Motor neuron (in vitro differentiated cells): ENCODE measurements at regions of chr19 and their contacts with region 1.

Region 1: GRCh38 chr19:36514012-36514612 is 14.0 kb downstream of the ZNF260 start:
- ATAC-seq: no peak
- H3K4me3 ChIP-seq: no peak overlapping the region
- H3K27ac ChIP-seq: no peak overlapping the region
- H3K4me1 ChIP-seq: no peaks in the 10 kb centered on the region

Region 2: DNA sequence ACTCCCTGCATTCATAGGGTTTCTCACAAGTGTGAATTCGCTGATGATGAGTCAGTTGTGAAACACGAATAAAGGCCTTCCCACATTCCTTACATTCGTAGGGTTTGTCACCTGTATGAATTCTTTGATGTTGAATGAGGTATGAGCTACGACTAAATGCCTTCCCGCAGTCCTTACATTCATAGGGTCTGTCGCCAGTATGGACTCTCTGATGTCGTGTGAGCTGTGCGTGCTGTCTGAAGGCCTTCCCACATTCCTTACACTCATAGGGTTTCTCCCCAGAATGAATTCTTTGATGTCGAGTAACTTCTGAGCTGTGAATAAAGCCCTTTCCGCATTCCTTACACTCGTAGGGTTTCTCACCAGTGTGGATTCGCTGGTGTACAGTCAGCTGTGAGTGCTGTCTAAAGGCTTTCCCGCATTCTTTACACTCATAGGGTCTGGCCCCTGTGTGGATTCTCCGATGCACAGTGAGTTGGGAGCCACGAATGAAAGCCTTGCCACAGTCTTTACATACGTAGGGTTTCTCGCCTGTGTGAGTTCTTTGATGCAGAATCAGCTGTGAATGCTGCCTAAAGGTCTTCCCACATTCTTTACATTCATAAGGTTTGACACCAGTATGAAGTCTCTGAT is 331.4 kb before region 1 on chr19:
- in situ Hi-C with region 1: loop called in 1 of 9 experiments (anchors 25 kb)
- ATAC-seq: peak in 1 of 8 experiments; percentile 23
- H3K4me3 ChIP-seq: no peak overlapping the region
- H3K27ac ChIP-seq: no peak overlapping the region
- H3K4me1 ChIP-seq: no peaks in the 10 kb centered on the region

Region 3: DNA sequence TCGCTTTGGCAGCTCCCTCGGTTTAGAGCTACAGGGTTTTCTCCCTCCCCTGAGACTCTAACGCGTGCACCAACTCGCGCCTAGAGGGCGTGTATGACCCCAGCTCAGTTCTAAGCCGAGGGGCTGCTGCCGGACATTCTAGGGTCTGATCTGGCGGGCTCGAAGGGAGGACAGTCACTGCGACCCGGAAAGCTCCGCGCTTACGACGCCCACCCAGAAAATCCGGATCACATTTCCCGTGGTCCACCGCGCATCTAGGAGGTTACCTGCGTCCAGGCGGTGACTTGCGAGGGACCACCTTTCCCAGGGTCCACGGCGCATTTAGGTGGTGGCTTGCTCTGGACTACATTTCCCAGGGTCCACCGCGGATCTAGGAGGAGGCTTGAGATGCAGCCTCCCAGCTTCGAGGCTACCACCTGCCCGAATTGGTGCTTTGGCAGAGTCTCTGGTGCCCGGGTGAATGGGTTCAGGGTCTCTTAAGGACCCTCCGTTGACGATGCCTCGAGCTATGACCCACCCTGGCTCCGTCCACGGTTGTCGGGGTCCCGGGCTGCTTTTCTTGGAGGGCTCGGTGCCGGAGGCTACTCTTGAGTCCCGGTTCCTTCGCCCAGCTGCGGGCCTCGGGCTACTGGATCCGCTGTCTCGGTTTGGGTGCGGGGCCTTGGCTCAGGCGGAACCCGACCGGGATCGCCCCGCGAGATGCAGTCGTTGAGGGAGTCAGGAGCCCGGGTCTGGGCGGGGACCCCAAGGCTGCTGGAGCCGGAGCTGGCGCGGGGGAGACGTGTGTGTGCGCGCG is 268.7 kb before region 1 on chr19:
- in situ Hi-C with region 1: no loop called
- ATAC-seq: peak in 4 of 8 experiments; percentile 14 to 65 (median 26)
- H3K4me3 ChIP-seq: no peak overlapping the region
- H3K27ac ChIP-seq: no peak overlapping the region
- H3K4me1 ChIP-seq: no peaks in the 10 kb centered on the region

Region 4: DNA sequence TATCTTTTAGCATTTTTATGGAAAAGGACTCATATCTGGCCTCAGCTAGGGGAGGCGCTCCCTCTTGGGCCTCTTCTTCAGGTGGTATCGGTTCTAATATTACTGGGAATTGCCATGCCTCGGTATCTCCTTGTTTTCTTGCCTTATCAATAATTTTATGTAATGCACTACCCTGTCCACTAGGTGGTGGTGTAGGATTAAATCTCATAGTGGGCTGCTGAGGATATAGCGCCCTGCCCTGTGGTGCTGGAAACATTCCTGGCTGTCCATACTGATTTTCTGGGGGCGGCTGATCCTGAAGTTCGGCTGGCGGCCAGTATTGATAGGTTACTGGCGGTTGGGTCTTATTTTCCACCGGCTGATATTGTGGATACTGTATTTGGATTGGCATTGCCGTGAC is 599.9 kb after region 1 on chr19:
- in situ Hi-C with region 1: no loop called
- ATAC-seq: no peak
- H3K4me3 ChIP-seq: no peak overlapping the region
- H3K27ac ChIP-seq: no peak overlapping the region
- H3K4me1 ChIP-seq: no peaks in the 10 kb centered on the region